ENCODE measurements at regions of chr7 and their contacts with region 1.

Region 1: GRCh38 chr7:100132697-100133151 is 6.0 kb downstream of the MBLAC1 start:
- DNase-seq: peak; percentile 82
- H3K4me3 Mint-ChIP-seq: no peak overlapping the region
- H3K27ac Mint-ChIP-seq: no peak overlapping the region
- H3K4me1 Mint-ChIP-seq: peaks cover 21% of the 10 kb centered on the region
- H3K27me3 Mint-ChIP-seq: no peaks in the 10 kb centered on the region

Region 2: GRCh38 chr7:99910976-99911375 is 221.7 kb before region 1 on chr7:
- CTCF ChIA-PET with region 1: interaction called, 4 read pairs
- intact Hi-C with region 1: loop called (anchors 2 kb)
- DNase-seq: no peak
- H3K4me3 Mint-ChIP-seq: no peak overlapping the region
- H3K27ac Mint-ChIP-seq: no peak overlapping the region
- H3K4me1 Mint-ChIP-seq: peaks cover 41% of the 10 kb centered on the region
- H3K27me3 Mint-ChIP-seq: no peaks in the 10 kb centered on the region

Region 3: GRCh38 chr7:99969298-99969697 is 163.4 kb before region 1 on chr7:
- CTCF ChIA-PET with region 1: no interaction called
- intact Hi-C with region 1: no loop called
- DNase-seq: no peak
- H3K4me3 Mint-ChIP-seq: no peak overlapping the region
- H3K27ac Mint-ChIP-seq: no peak overlapping the region
- H3K4me1 Mint-ChIP-seq: no peaks in the 10 kb centered on the region
- H3K27me3 Mint-ChIP-seq: peaks cover 11% of the 10 kb centered on the region

Region 4: GRCh38 chr7:99997545-99998137 is 135.1 kb before region 1 on chr7:
- CTCF ChIA-PET with region 1: interaction called, 6 read pairs
- intact Hi-C with region 1: loop called (anchors 1 kb)
- DNase-seq: peak; percentile 78
- H3K4me3 Mint-ChIP-seq: peak overlapping the region; percentile 69
- H3K27ac Mint-ChIP-seq: peak overlapping the region; percentile 78
- H3K4me1 Mint-ChIP-seq: peaks cover 10% of the 10 kb centered on the region
- H3K27me3 Mint-ChIP-seq: no peaks in the 10 kb centered on the region

Region 5: GRCh38 chr7:100148559-100149350 is 16.0 kb after region 1 on chr7 and contains the start of gene LAMTOR4:
- CTCF ChIA-PET with region 1: interaction called, 34 read pairs
- intact Hi-C with region 1: no loop called
- DNase-seq: peak; percentile 100
- H3K4me3 Mint-ChIP-seq: peak within 1 kb of the TSS; percentile 100
- H3K27ac Mint-ChIP-seq: peak within 1 kb of the TSS; percentile 99
- H3K4me1 Mint-ChIP-seq: peaks cover 29% of the 10 kb centered on the region
- H3K27me3 Mint-ChIP-seq: no peaks in the 10 kb centered on the region
- total RNA-seq, gene LAMTOR4: 129 to 135 TPM

Region 6: DNA sequence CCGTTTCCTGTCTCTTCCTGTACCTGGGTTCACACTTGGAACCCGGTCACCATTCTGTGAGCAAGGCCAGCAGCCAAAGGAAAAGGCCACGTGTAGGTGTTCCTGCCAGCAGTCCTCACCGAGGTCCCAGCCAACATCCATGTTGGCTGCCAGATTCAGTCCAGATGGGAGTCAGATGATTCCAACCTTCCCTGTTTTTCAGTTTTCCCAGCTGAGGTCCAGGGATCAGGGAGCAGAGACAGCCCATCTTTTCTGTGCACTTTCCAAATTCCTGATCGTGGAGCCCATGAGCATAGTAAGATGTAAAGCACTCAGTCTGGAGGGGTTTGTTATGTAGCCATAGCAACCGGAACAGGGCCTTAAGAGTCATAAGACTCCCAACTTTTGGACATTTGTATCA is 83.2 kb after region 1 on chr7:
- CTCF ChIA-PET with region 1: interaction called, 41 read pairs
- intact Hi-C with region 1: loop called (anchors 1 kb)
- DNase-seq: no peak
- H3K4me3 Mint-ChIP-seq: no peak overlapping the region
- H3K27ac Mint-ChIP-seq: peak overlapping the region; percentile 8
- H3K4me1 Mint-ChIP-seq: peaks cover 67% of the 10 kb centered on the region
- H3K27me3 Mint-ChIP-seq: no peaks in the 10 kb centered on the region

Region 7: GRCh38 chr7:100257017-100257416 is 124.3 kb after region 1 on chr7:
- CTCF ChIA-PET with region 1: no interaction called
- intact Hi-C with region 1: no loop called
- DNase-seq: no peak
- H3K4me3 Mint-ChIP-seq: no peak overlapping the region
- H3K27ac Mint-ChIP-seq: no peak overlapping the region
- H3K4me1 Mint-ChIP-seq: no peaks in the 10 kb centered on the region
- H3K27me3 Mint-ChIP-seq: no peaks in the 10 kb centered on the region

Region 8: DNA sequence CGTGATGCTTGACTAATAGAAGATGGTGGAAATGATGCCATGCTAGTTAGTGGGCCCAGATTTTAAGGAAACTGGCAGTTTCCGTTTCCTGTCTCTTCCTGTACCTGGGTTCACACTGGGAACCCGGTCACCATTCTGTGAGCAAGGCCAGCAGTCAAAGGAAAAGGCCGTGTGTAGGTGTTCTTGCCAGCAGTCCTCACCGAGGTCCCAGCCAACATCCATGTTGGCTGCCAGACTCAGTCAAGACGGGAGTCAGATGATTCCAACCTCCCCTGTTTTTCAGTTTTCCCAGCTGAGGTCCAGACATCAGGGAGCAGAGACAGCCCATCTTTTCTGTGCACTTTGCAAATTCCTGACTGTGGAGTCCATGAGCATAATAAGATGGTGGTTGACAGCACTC is 210.0 kb after region 1 on chr7:
- CTCF ChIA-PET with region 1: interaction called, 3 read pairs
- intact Hi-C with region 1: loop called (anchors 5 kb)
- DNase-seq: no peak
- H3K4me3 Mint-ChIP-seq: no peak overlapping the region
- H3K27ac Mint-ChIP-seq: peak overlapping the region; percentile 81
- H3K4me1 Mint-ChIP-seq: peaks cover 46% of the 10 kb centered on the region
- H3K27me3 Mint-ChIP-seq: no peaks in the 10 kb centered on the region

Region 9: DNA sequence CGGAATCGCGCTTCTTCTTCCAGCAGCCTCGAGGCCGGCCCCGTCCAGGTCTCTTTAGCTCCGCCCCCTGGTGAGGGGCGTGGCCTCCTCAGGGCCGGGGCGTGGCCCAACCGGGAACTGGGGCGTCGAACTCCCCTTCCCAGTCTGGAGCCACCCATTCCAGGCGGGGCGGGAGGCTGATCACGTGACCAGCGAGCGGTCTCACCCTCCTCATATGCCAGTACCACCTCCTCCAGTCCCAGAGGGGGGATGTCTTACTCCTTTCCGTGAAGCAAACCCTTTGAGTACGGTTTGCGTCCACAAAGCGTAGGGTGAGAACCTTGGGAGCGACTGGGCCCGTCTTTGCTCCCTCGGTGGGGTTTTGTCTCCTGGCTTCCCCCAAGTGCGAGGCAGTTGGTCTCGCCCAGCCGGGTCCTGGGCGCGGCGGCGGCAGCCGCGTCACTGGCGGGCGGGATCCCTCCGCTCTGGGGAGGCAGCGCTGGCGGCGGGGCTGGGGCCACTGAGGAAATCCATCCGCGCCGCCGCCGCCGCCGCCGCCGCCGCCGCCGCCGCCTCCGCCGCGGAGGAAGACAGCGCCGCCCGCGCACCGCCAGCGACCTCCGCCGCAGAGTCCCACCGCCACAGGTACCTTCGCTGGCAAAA is 540.7 kb after region 1 on chr7 and contains the start of gene GNB2:
- CTCF ChIA-PET with region 1: no interaction called
- intact Hi-C with region 1: no loop called
- DNase-seq: peak; percentile 100
- H3K4me3 Mint-ChIP-seq: peak within 1 kb of the TSS; percentile 97
- H3K27ac Mint-ChIP-seq: peak within 1 kb of the TSS; percentile 95
- H3K4me1 Mint-ChIP-seq: peaks cover 17% of the 10 kb centered on the region
- H3K27me3 Mint-ChIP-seq: no peaks in the 10 kb centered on the region
- total RNA-seq, gene GNB2: 221 TPM

Measured in activated naive CD4-positive, alpha-beta T cell treated with anti-CD3 and anti-CD28 coated beads for 36 hours (primary cell).